Heart right ventricle (tissue), 16 donors: ENCODE measurements at regions of chr5 and their contacts with region 1.

Region 1: DNA sequence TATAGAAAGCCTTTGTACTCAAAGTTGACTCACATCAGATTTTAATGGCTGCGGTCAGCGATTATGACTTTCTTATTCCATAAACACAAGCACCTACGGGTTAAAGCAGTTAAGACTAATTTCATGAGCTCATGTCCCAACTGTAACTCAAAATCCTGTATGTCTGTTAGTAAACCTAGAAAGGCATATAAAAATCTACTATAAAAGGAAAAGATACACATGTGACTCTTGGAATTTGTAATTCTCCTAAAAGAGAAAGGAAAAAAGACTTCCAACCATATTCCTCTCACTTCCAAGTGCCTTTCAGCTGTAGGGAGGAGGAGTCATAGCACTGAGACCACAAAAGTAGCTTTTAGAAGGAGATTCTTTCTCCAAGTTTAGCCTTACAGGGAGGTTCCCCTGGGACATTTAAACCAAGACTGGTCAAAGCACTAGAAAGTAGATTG is 129.1 kb downstream of the EBF1 start:
- DNase-seq: no peak
- ATAC-seq: peak in 2 of 8 donors; percentile 20 to 39
- H3K4me3 ChIP-seq: no peak overlapping the region
- H3K27ac ChIP-seq: peak overlapping the region in 4 of 10 donors; percentile 3 to 44 (median 12)
- H3K4me1 ChIP-seq: peaks cover 0 to 50% (median 19%) of the 10 kb centered on the region in 9 donors
- H3K27me3 ChIP-seq: no peaks in the 10 kb centered on the region
- CTCF ChIP-seq: no peak

Region 2: DNA sequence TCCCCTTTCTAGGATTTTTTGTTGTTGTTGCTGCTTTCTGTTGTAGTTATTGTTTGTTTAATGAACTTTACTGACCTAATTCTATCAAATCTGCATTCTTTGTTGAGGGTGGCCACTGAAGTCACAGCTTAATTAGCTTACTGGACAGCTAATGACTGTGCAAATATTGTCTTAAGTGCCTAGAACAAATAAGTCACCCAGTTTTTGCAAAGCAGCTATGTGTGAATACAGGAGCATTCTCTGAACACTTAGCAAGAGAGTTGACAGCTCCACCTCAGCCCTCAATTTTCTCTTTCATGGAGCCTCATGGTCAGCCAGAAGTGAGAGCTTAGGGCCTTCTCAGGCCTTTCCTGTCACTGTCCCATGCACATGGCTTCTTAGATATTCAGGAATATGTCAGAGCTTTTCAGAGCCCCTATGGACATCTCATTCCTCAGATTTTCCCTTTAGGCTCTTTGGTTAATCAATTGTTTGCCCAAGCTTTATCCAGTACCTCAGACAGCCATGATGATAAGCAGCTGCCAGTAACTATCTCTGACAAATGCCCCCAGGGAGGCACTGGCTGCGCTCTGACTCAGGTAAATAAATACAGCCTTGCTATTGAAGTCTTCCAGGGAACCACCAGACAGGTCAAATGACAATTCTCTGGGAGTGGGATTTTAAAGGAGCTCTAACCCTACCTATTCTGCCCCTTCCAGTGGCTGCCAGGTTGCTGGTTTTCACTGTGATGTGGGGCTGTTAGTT is 601.1 kb after region 1 on chr5:
- intact Hi-C with region 1: loop called in 1 of 10 experiments (anchors 5 kb)
- DNase-seq: no peak
- ATAC-seq: no peak
- H3K4me3 ChIP-seq: no peak overlapping the region
- H3K27ac ChIP-seq: no peak overlapping the region
- H3K4me1 ChIP-seq: no peaks in the 10 kb centered on the region
- H3K27me3 ChIP-seq: no peaks in the 10 kb centered on the region
- CTCF ChIP-seq: no peak